Lower leg skin (tissue), 4 donors: ENCODE measurements at regions of chr7 and their contacts with region 1.

Region 1: GRCh38 chr7:144960763-144961162 is 124.9 kb upstream of the TPK1 start:
- DNase-seq: no peak
- H3K4me3 ChIP-seq: no peak overlapping the region
- CTCF ChIP-seq: no peak
- POLR2A ChIP-seq: no peak

Region 2: DNA sequence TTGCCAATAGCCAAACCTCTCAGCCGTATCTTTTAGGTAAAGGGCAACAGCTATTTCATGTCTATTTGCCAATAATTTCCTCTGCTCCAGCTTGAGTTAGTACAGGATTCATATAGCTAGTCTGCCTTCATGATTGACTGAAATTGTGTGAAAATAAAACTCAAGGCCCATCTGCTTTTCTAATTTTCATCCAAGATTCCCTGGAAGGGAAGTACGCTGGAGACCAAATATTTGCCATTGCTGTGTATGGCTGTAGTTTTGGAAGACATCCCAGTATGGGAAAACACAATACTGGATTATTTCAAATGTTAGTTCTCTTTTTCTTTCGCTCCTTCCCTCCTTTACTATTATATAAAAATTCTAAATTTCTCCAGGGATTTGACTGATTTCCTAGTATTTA is 1808.2 kb after region 1 on chr7:
- intact Hi-C with region 1: loop called (anchors 5 kb)
- DNase-seq: no peak
- H3K4me3 ChIP-seq: no peak overlapping the region
- CTCF ChIP-seq: no peak
- POLR2A ChIP-seq: no peak